Activated CD4-positive, alpha-beta memory T cell treated with anti-CD3 and anti-CD28 coated beads for 36 hours (primary cell): ENCODE measurements at regions of chr1 and their contacts with region 1.

Region 1: DNA sequence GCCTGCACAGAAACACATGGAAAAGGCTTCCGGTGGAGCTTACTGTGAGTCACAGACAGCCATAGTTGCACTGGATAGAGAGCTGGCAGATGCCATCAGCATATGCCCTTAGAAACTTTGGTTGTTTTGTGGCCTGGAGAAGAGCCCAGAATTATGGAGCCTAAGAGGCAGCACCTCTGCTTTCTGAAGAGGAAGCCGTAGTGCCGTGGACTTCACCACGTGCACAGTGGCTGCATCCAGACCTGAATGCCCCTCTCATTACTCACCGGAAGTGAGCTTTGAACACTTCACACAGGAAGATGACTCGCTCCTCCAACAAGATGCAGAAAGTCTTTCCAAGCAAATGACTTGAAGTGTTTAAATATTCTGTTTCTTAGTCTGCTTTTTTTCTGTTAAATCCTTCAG is 28.4 kb downstream of the JUN start:
- DNase-seq: peak; percentile 80
- H3K4me3 Mint-ChIP-seq: no peak overlapping the region
- H3K27ac Mint-ChIP-seq: peak overlapping the region; percentile 78
- H3K4me1 Mint-ChIP-seq: peaks cover 44% of the 10 kb centered on the region
- H3K27me3 Mint-ChIP-seq: no peaks in the 10 kb centered on the region

Region 2: GRCh38 chr1:58058323-58058722 is 697.1 kb before region 1 on chr1:
- CTCF ChIA-PET with region 1: no interaction called
- POLR2A ChIA-PET with region 1: no interaction called
- intact Hi-C with region 1: no loop called
- DNase-seq: no peak
- H3K4me3 Mint-ChIP-seq: no peak overlapping the region
- H3K27ac Mint-ChIP-seq: no peak overlapping the region
- H3K4me1 Mint-ChIP-seq: no peaks in the 10 kb centered on the region
- H3K27me3 Mint-ChIP-seq: no peaks in the 10 kb centered on the region

Region 3: GRCh38 chr1:58699011-58699762 is 56.3 kb before region 1 on chr1:
- CTCF ChIA-PET with region 1: no interaction called
- POLR2A ChIA-PET with region 1: interaction called, 3 read pairs
- intact Hi-C with region 1: loop called (anchors 2 kb)
- DNase-seq: no peak
- H3K4me3 Mint-ChIP-seq: peak overlapping the region; percentile 95
- H3K27ac Mint-ChIP-seq: peak overlapping the region; percentile 92
- H3K4me1 Mint-ChIP-seq: peaks cover 15% of the 10 kb centered on the region
- H3K27me3 Mint-ChIP-seq: no peaks in the 10 kb centered on the region

Region 4: DNA sequence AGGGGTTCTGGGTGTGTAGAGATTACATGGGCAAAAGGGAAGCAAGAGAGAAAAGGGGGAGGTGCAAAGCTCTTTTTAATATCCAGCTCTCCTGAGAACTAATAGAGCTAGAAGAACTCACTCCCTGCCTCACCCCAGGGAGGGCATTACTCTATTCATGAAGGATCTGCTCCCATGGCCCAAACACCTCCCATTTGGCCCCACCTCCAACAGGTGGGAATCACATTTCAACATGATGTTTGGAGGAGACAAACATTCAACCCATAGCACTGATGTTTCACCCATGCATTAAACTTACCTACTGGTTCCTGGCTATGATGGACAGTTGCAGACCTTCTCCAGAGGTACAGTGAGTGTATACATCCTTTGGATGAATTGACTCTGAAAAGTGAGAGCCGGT is 35.6 kb after region 1 on chr1:
- CTCF ChIA-PET with region 1: no interaction called
- POLR2A ChIA-PET with region 1: no interaction called
- intact Hi-C with region 1: no loop called
- DNase-seq: no peak
- H3K4me3 Mint-ChIP-seq: no peak overlapping the region
- H3K27ac Mint-ChIP-seq: no peak overlapping the region
- H3K4me1 Mint-ChIP-seq: peaks cover 19% of the 10 kb centered on the region
- H3K27me3 Mint-ChIP-seq: no peaks in the 10 kb centered on the region

Region 5: DNA sequence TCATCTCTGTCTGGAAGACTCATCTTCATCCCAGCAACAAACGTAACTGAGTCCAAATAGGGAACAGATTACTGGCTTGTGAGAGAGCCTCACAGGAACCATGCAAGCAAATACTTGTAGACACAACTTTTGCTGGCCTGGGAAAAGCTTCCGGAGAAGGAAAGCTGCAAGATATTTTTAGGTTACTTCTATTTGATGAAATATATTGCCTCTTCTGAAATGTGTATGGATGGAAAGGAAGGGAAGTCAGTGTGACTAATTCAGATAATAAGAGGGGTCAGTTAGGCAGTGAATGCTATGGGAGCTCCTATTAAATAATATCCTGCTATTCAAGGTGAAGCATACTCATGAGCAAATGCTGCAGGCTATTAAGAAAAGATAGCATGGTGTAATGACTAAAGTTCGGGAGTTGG is 521.0 kb after region 1 on chr1:
- CTCF ChIA-PET with region 1: no interaction called
- POLR2A ChIA-PET with region 1: no interaction called
- intact Hi-C with region 1: no loop called
- DNase-seq: no peak
- H3K4me3 Mint-ChIP-seq: no peak overlapping the region
- H3K27ac Mint-ChIP-seq: no peak overlapping the region
- H3K4me1 Mint-ChIP-seq: peaks cover 5% of the 10 kb centered on the region
- H3K27me3 Mint-ChIP-seq: peaks cover 3% of the 10 kb centered on the region